Left cardiac atrium (tissue), 4 donors: ENCODE measurements at regions of chr3 and their contacts with region 1.

Region 1: DNA sequence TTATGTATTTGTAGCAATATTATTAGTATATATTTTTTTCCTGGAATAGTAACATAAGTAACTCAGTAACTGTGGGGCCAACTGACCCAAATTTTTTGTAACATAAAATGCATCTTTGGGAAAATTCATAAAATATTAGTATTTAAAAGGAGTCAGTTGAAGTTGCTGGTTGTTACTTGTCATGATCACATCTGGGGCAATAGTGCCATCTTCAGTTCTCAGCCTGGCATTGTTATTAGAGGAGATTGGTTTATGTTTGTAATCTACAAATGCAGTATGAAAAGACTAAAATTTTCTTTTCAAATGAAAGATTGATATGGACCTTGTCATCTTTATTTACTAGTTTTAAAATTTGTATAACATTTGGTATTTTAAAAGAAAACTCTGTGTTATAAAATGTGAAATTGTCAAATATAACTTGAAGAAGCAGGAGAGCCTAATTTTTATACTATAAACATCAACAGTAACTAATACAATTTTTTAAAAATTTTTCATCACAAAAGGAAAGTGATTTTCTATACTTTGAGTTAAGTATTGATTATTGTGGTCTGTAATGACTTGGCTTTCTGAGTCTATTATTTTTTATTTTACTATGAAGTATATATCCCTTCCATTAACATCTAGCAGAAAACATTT is 38.8 kb upstream of the MLF1 start:
- DNase-seq: no peak
- ATAC-seq: no peak

Region 2: GRCh38 chr3:157606011-157606851 is 926.0 kb before region 1 on chr3:
- intact Hi-C with region 1: loop called (anchors 5 to 10 kb)
- DNase-seq: peak; percentile 58
- ATAC-seq: peak; percentile 72 to 87